HepG2 (cell line): ENCODE measurements at regions of chr15 and their contacts with region 1.

Region 1: GRCh38 chr15:40694688-40695468 is at the start of gene RAD51:
- DNase-seq: peak; percentile 89
- ATAC-seq: peak; percentile 91
- H3K4me3 ChIP-seq: peak within 1 kb of the TSS; percentile 80 to 100 (median 92)
- H3K27ac ChIP-seq: peak within 1 kb of the TSS; percentile 97
- H3K4me1 ChIP-seq: peaks cover 20% of the 10 kb centered on the region
- H3K27me3 ChIP-seq: peaks cover 0 to 5% of the 10 kb centered on the region in 2 experiments; a peak in 1 of 5 replicates
- CTCF ChIP-seq: peak; percentile 6; the same call in 1 of the 2 replicates
- EP300 ChIP-seq: no peak
- POLR2A ChIP-seq: peak; percentile 68 to 76; a peak in 3 of 4 replicates
- RAD21 ChIP-seq: no peak
- total RNA-seq, gene RAD51: 12.8 and 20.6 TPM in 2 replicates

Region 2: GRCh38 chr15:39363761-39364586 is 1330.9 kb before region 1 on chr15:
- CTCF ChIA-PET with region 1: no interaction called
- POLR2A ChIA-PET with region 1: no interaction called
- in situ Hi-C with region 1: no loop called
- intact Hi-C with region 1: no loop called
- DNase-seq: peak; percentile 79
- ATAC-seq: peak; percentile 80
- H3K4me3 ChIP-seq: no peak overlapping the region
- H3K27ac ChIP-seq: peak overlapping the region; percentile 23
- H3K4me1 ChIP-seq: peaks cover 58% of the 10 kb centered on the region
- H3K27me3 ChIP-seq: no peaks in the 10 kb centered on the region
- CTCF ChIP-seq: no peak
- EP300 ChIP-seq: peak; percentile 60 to 83; a peak in 3 of 4 replicates
- POLR2A ChIP-seq: no peak
- RAD21 ChIP-seq: no peak

Region 3: DNA sequence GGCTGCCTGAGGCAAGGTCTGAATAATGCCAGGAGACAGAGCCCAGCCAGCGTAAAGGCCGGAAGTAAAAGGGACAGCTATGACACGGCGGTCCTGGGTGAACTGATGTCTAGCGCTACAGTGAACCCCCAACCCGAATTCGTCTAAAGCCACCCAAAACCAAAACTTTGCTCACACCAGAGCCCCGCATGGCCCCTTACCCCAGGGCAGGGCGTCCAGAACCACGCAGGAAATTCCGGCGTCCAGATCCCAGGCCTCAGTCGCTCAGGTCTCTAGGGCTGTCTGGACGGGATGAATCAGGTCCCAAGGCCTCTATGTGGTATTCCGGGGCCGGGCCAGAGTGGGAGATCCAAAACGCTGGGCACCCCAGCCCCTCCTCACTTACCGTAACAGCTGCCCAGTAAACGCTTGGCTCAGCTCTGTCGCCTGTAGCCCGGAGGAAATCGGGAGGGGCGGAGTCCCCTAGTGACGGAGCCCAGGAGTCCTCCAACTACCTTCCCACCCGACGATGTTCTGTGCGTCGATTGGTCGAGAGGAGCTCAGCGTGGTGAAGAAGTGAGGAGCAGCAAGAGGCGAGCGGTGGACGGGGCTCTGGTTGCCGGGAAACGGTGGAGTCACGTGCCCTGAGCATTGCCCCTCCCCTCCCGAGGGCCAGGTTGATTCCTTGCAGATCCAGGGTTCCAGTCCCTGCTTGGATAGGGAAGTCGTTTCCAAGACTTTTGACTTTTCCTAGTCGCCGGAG is 130.1 kb before region 1 on chr15 and contains the start of gene CCDC32:
- CTCF ChIA-PET with region 1: no interaction called
- POLR2A ChIA-PET with region 1: interaction called, 5 read pairs
- in situ Hi-C with region 1: no loop called
- intact Hi-C with region 1: loop called (anchors 2 kb)
- DNase-seq: peak; percentile 98
- ATAC-seq: peak; percentile 96
- H3K4me3 ChIP-seq: peak within 1 kb of the TSS; percentile 86 to 94 (median 91)
- H3K27ac ChIP-seq: peak within 1 kb of the TSS; percentile 73
- H3K4me1 ChIP-seq: peaks cover 46% of the 10 kb centered on the region
- H3K27me3 ChIP-seq: no peaks in the 10 kb centered on the region; a peak in 1 of 5 replicates
- CTCF ChIP-seq: no peak
- EP300 ChIP-seq: no peak
- POLR2A ChIP-seq: peak; percentile 77 to 86
- RAD21 ChIP-seq: no peak
- total RNA-seq, gene CCDC32: 23.2 and 26.3 TPM in 2 replicates

Region 4: GRCh38 chr15:40593588-40594428 is 101.1 kb before region 1 on chr15 and contains the start of gene KNL1:
- CTCF ChIA-PET with region 1: no interaction called
- POLR2A ChIA-PET with region 1: interaction called, 6 read pairs
- in situ Hi-C with region 1: no loop called
- intact Hi-C with region 1: loop called (anchors 10 kb)
- DNase-seq: peak; percentile 92
- ATAC-seq: peak; percentile 75
- H3K4me3 ChIP-seq: peak within 1 kb of the TSS; percentile 74 to 83 (median 81)
- H3K27ac ChIP-seq: peak within 1 kb of the TSS; percentile 94
- H3K4me1 ChIP-seq: peaks cover 39% of the 10 kb centered on the region
- H3K27me3 ChIP-seq: no peaks in the 10 kb centered on the region; a peak in 1 of 5 replicates
- CTCF ChIP-seq: no peak
- EP300 ChIP-seq: peak; percentile 30 to 56; a peak in 2 of 4 replicates
- POLR2A ChIP-seq: peak; percentile 47 to 77; a peak in 2 of 4 replicates
- RAD21 ChIP-seq: no peak
- total RNA-seq, gene KNL1: 21.4 and 34.5 TPM in 2 replicates

Region 5: GRCh38 chr15:40650479-40650878 is 44.4 kb before region 1 on chr15:
- CTCF ChIA-PET with region 1: no interaction called
- POLR2A ChIA-PET with region 1: interaction called, 17 read pairs
- in situ Hi-C with region 1: no loop called
- intact Hi-C with region 1: no loop called
- DNase-seq: peak; percentile 10
- ATAC-seq: no peak
- H3K4me3 ChIP-seq: peak overlapping the region; percentile 22 to 52 (median 29); a peak in 3 of 6 replicates
- H3K27ac ChIP-seq: peak overlapping the region; percentile 90
- H3K4me1 ChIP-seq: peaks cover 20% of the 10 kb centered on the region
- H3K27me3 ChIP-seq: no peaks in the 10 kb centered on the region
- CTCF ChIP-seq: no peak
- EP300 ChIP-seq: no peak
- POLR2A ChIP-seq: no peak
- RAD21 ChIP-seq: no peak

Region 6: DNA sequence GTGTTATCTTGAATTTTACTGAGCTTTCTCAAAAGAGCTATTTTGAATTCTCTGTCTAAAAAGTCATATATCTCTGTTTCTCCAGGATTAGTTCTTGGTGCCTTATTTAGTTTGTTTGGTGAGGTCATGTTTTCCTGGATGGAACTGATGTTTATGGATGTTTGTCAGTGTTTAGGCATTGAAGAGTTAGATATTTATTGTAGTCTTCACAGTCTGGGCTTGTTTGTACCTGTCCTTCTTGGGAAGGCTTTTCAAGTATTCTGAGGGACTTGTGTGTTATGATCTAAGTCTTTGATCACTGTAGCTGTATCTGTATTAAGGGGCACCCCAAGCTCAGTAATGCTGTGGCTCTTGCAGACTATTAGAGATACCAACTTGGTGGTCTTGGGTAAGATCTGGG is 10.5 kb before region 1 on chr15:
- CTCF ChIA-PET with region 1: no interaction called
- POLR2A ChIA-PET with region 1: interaction called, 10 read pairs
- in situ Hi-C with region 1: no loop called
- intact Hi-C with region 1: no loop called
- DNase-seq: no peak
- ATAC-seq: no peak
- H3K4me3 ChIP-seq: no peak overlapping the region
- H3K27ac ChIP-seq: no peak overlapping the region
- H3K4me1 ChIP-seq: peaks cover 16% of the 10 kb centered on the region
- H3K27me3 ChIP-seq: no peaks in the 10 kb centered on the region
- CTCF ChIP-seq: no peak
- EP300 ChIP-seq: no peak
- POLR2A ChIP-seq: no peak
- RAD21 ChIP-seq: no peak

Region 7: GRCh38 chr15:40763801-40764732 is 69.2 kb after region 1 on chr15 and contains the start of gene GCHFR:
- CTCF ChIA-PET with region 1: no interaction called
- POLR2A ChIA-PET with region 1: interaction called, 16 read pairs
- in situ Hi-C with region 1: no loop called
- intact Hi-C with region 1: no loop called
- DNase-seq: peak; percentile 83
- ATAC-seq: peak; percentile 83
- H3K4me3 ChIP-seq: peak within 1 kb of the TSS; percentile 74 to 81 (median 75)
- H3K27ac ChIP-seq: peak within 1 kb of the TSS; percentile 100
- H3K4me1 ChIP-seq: peaks cover 55% of the 10 kb centered on the region
- H3K27me3 ChIP-seq: no peaks in the 10 kb centered on the region
- CTCF ChIP-seq: peak; percentile 70
- EP300 ChIP-seq: no peak; a peak in 1 of 4 replicates
- POLR2A ChIP-seq: peak; percentile 88 to 96
- RAD21 ChIP-seq: peak; percentile 67
- total RNA-seq, gene GCHFR: 92.4 and 93.1 TPM in 2 replicates

Region 8: GRCh38 chr15:41022487-41023090 is 327.7 kb after region 1 on chr15:
- CTCF ChIA-PET with region 1: no interaction called
- POLR2A ChIA-PET with region 1: no interaction called
- in situ Hi-C with region 1: no loop called
- intact Hi-C with region 1: no loop called
- DNase-seq: peak; percentile 28
- ATAC-seq: peak; percentile 71
- H3K4me3 ChIP-seq: no peak overlapping the region
- H3K27ac ChIP-seq: no peak overlapping the region
- H3K4me1 ChIP-seq: peaks cover 34% of the 10 kb centered on the region
- H3K27me3 ChIP-seq: no peaks in the 10 kb centered on the region
- CTCF ChIP-seq: peak; percentile 83
- EP300 ChIP-seq: no peak
- POLR2A ChIP-seq: no peak
- RAD21 ChIP-seq: peak; percentile 60; the same call in 1 of the 2 replicates